GM12878 (cell line): ENCODE measurements at regions of chr3 and their contacts with region 1.

Region 1: GRCh38 chr3:60555684-60556354 is 695.4 kb downstream of the FHIT start:
- DNase-seq: peak; percentile 48
- ATAC-seq: peak; percentile 89
- H3K4me3 ChIP-seq: no peak overlapping the region
- H3K27ac ChIP-seq: no peak overlapping the region
- H3K4me1 ChIP-seq: peaks cover 7% of the 10 kb centered on the region
- H3K27me3 ChIP-seq: no peaks in the 10 kb centered on the region
- CTCF ChIP-seq: no peak
- EP300 ChIP-seq: peak; percentile 69 to 82; a peak in 3 of 4 replicates
- POLR2A ChIP-seq: no peak
- RAD21 ChIP-seq: no peak

Region 2: GRCh38 chr3:60133269-60134162 is 422.3 kb before region 1 on chr3:
- CTCF ChIA-PET with region 1: no interaction called
- POLR2A ChIA-PET with region 1: no interaction called
- RAD21 ChIA-PET with region 1: no interaction called
- SMC1A ChIA-PET with region 1: no interaction called
- in situ Hi-C with region 1: no loop called
- intact Hi-C with region 1: no loop called
- DNase-seq: no peak
- ATAC-seq: no peak
- H3K4me3 ChIP-seq: no peak overlapping the region
- H3K27ac ChIP-seq: no peak overlapping the region
- H3K4me1 ChIP-seq: no peaks in the 10 kb centered on the region
- H3K27me3 ChIP-seq: no peaks in the 10 kb centered on the region
- CTCF ChIP-seq: no peak
- EP300 ChIP-seq: no peak
- POLR2A ChIP-seq: no peak
- RAD21 ChIP-seq: no peak

Region 3: DNA sequence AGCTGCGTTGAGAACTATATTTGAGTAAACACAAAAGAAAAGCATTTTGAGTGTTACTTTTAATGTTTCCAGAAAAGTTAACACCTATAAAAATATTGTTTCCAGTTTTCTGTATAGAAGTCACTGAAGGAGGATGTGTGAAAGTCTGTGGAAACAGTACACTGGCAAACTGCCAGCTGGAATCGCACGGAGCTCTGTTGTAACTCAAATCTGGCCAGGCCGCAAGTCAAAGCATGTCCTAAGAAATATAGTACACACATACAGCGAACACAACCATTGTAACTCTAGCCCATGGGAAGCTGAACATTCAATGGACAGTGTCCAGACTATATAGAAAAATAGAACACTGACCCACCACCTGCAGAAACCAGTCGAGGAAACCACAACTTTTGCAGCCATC is 38.2 kb after region 1 on chr3:
- CTCF ChIA-PET with region 1: no interaction called
- POLR2A ChIA-PET with region 1: no interaction called
- RAD21 ChIA-PET with region 1: no interaction called
- SMC1A ChIA-PET with region 1: no interaction called
- in situ Hi-C with region 1: no loop called
- intact Hi-C with region 1: no loop called
- DNase-seq: no peak
- ATAC-seq: no peak
- H3K4me3 ChIP-seq: no peak overlapping the region
- H3K27ac ChIP-seq: no peak overlapping the region
- H3K4me1 ChIP-seq: no peaks in the 10 kb centered on the region
- H3K27me3 ChIP-seq: no peaks in the 10 kb centered on the region
- CTCF ChIP-seq: no peak
- EP300 ChIP-seq: no peak
- POLR2A ChIP-seq: no peak
- RAD21 ChIP-seq: no peak

Region 4: GRCh38 chr3:60650171-60650570 is 94.4 kb after region 1 on chr3:
- CTCF ChIA-PET with region 1: no interaction called
- POLR2A ChIA-PET with region 1: no interaction called
- RAD21 ChIA-PET with region 1: no interaction called
- SMC1A ChIA-PET with region 1: interaction called, 3 read pairs
- in situ Hi-C with region 1: no loop called
- intact Hi-C with region 1: loop called (anchors 5 kb)
- DNase-seq: no peak
- ATAC-seq: no peak
- H3K4me3 ChIP-seq: no peak overlapping the region
- H3K27ac ChIP-seq: no peak overlapping the region
- H3K4me1 ChIP-seq: no peaks in the 10 kb centered on the region
- H3K27me3 ChIP-seq: no peaks in the 10 kb centered on the region
- CTCF ChIP-seq: no peak
- EP300 ChIP-seq: no peak
- POLR2A ChIP-seq: no peak
- RAD21 ChIP-seq: no peak